Heart left ventricle (tissue), 16 donors: ENCODE measurements at regions of chr1 and their contacts with region 1.

Region 1: GRCh38 chr1:51878616-51879336 is at the start of gene NRDC:
- DNase-seq: peak; percentile 99 to 100 (median 100)
- ATAC-seq: peak; percentile 97 to 99 (median 98)
- H3K4me3 ChIP-seq: peak within 1 kb of the TSS; percentile 75 to 97 (median 92)
- H3K27ac ChIP-seq: peak within 1 kb of the TSS; percentile 81 to 99 (median 97)
- H3K4me1 ChIP-seq: peaks cover 8 to 46% (median 34%) of the 10 kb centered on the region in 12 donors
- H3K27me3 ChIP-seq: peaks cover 0 to 27% (median under 1%) of the 10 kb centered on the region in 9 donors
- CTCF ChIP-seq: peak in 1 of 12 donors; percentile 11
- POLR2A ChIP-seq: peak; percentile 6 to 85
- total RNA-seq, gene NRDC: 89.4 to 152 (median 125) TPM

Region 2: GRCh38 chr1:50959913-50960844 is 918.6 kb before region 1 on chr1 and contains the start of gene FAF1:
- intact Hi-C with region 1: loop called in 1 of 10 experiments (anchors 10 kb)
- DNase-seq: peak; percentile 96 to 98 (median 97)
- ATAC-seq: peak; percentile 96 to 99 (median 99)
- H3K4me3 ChIP-seq: peak within 1 kb of the TSS; percentile 44 to 89 (median 75)
- H3K27ac ChIP-seq: peak within 1 kb of the TSS; percentile 51 to 93 (median 86)
- H3K4me1 ChIP-seq: peaks cover 0 to 37% (median 17%) of the 10 kb centered on the region in 12 donors
- H3K27me3 ChIP-seq: no peaks in the 10 kb centered on the region
- CTCF ChIP-seq: peak in 6 of 12 donors; percentile 13 to 35 (median 20)
- POLR2A ChIP-seq: peak; percentile 37 to 88
- total RNA-seq, gene FAF1: 46.6 to 112 (median 83.6) TPM

Region 3: DNA sequence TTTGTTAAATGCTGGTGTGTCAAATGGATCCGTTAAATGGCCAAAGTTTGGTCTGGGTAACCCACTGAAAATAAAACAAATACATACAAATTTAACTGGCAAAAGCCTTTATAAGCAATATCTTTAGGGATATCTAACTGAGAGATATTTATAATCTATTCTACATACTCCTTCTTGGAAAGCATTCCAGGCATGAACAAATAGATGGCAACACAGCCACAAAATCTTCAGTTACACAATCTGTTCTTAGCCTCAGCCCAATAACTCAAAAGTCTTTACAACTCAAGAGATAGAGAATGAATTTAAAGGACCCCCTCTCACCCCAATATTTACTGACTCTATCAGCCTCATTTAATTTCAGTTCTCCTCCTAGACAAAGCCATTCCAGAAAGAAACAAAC is 59.0 kb before region 1 on chr1:
- intact Hi-C with region 1: no loop called
- DNase-seq: no peak
- ATAC-seq: no peak
- H3K4me3 ChIP-seq: no peak overlapping the region
- H3K27ac ChIP-seq: no peak overlapping the region
- H3K4me1 ChIP-seq: no peaks in the 10 kb centered on the region
- H3K27me3 ChIP-seq: no peaks in the 10 kb centered on the region
- CTCF ChIP-seq: no peak
- POLR2A ChIP-seq: no peak